Breast epithelium (tissue), 4 donors: ENCODE measurements at regions of chrX and their contacts with region 1.

Region 1: DNA sequence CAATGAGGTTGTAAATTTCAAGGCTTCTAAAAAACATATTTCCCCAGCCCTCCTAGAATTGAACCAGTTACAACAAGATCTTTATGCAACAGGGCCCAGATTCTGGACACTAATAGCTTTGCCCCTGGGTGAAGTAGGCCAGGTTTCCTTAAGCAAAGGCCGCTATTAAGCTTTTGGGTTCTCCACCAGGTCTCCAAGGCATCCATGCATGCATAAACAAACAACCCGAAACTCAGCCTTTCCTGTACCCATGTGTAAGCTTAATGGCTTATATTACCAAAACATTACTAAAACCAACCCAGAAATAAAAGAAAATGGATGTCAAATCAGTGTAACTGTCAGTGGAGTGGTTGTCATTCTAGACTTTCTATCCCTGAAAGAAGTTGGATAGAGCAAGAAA is 137.1 kb downstream of the ARHGAP6 start:
- DNase-seq: no peak
- H3K4me3 ChIP-seq: no peak overlapping the region
- H3K27ac ChIP-seq: no peak overlapping the region
- H3K4me1 ChIP-seq: no peaks in the 10 kb centered on the region
- H3K27me3 ChIP-seq: peaks cover 0 to 29% of the 10 kb centered on the region in 2 donors
- CTCF ChIP-seq: no peak
- POLR2A ChIP-seq: no peak

Region 2: GRCh38 chrX:11146411-11146810 is 382.2 kb before region 1 on chrX:
- intact Hi-C with region 1: loop called (anchors 5 kb)
- DNase-seq: no peak
- H3K4me3 ChIP-seq: no peak overlapping the region
- H3K27ac ChIP-seq: no peak overlapping the region
- H3K4me1 ChIP-seq: no peaks in the 10 kb centered on the region
- H3K27me3 ChIP-seq: peaks cover 0 to 47% of the 10 kb centered on the region in 2 donors
- CTCF ChIP-seq: no peak
- POLR2A ChIP-seq: no peak

Region 3: GRCh38 chrX:11558972-11559371 is 30.3 kb after region 1 on chrX:
- intact Hi-C with region 1: no loop called
- DNase-seq: no peak
- H3K4me3 ChIP-seq: no peak overlapping the region
- H3K27ac ChIP-seq: no peak overlapping the region
- H3K4me1 ChIP-seq: no peaks in the 10 kb centered on the region
- H3K27me3 ChIP-seq: no peaks in the 10 kb centered on the region
- CTCF ChIP-seq: no peak
- POLR2A ChIP-seq: no peak

Region 4: GRCh38 chrX:11970578-11971359 is 442.1 kb after region 1 on chrX:
- intact Hi-C with region 1: no loop called
- DNase-seq: no peak
- H3K4me3 ChIP-seq: no peak overlapping the region
- H3K27ac ChIP-seq: no peak overlapping the region
- H3K4me1 ChIP-seq: no peaks in the 10 kb centered on the region
- H3K27me3 ChIP-seq: peaks cover 0 to 14% of the 10 kb centered on the region in 2 donors
- CTCF ChIP-seq: no peak
- POLR2A ChIP-seq: no peak